Endothelial cell of umbilical vein (primary cell): ENCODE measurements at regions of chr12 and their contacts with region 1.

Region 1: GRCh38 chr12:107702106-107702505 is 16.5 kb downstream of the PWP1 start:
- DNase-seq: no peak
- H3K4me3 ChIP-seq: no peak overlapping the region
- H3K27ac ChIP-seq: no peak overlapping the region
- H3K4me1 ChIP-seq: no peaks in the 10 kb centered on the region
- H3K27me3 ChIP-seq: no peaks in the 10 kb centered on the region
- CTCF ChIP-seq: no peak
- POLR2A ChIP-seq: no peak

Region 2: DNA sequence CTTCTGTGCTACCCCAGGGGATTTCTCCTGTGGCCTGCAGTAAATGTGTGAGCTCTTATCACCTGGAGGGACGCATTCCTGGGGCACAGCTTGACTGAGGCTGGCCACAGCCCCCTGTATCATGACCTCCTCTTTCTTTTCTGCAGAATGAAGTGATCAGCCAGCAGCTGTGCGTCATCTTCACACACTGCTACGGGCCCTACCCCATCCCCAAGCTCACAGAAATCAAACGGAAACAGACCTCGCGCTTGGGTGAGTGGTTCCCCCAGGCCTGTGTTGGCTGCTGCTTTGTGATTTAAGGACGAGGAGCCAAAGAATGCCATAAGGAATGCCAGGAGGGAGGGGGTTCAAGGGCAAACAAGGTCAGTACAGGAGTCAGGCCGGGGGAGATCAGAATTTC is 67.0 kb before region 1 on chr12:
- CTCF ChIA-PET with region 1: no interaction called
- POLR2A ChIA-PET with region 1: no interaction called
- dilution Hi-C with region 1: no loop called
- intact Hi-C with region 1: no loop called
- DNase-seq: peak; percentile 38
- H3K4me3 ChIP-seq: no peak overlapping the region
- H3K27ac ChIP-seq: no peak overlapping the region
- H3K4me1 ChIP-seq: no peaks in the 10 kb centered on the region
- H3K27me3 ChIP-seq: no peaks in the 10 kb centered on the region
- CTCF ChIP-seq: no peak
- POLR2A ChIP-seq: no peak

Region 3: GRCh38 chr12:107660235-107660634 is 41.9 kb before region 1 on chr12:
- CTCF ChIA-PET with region 1: no interaction called
- POLR2A ChIA-PET with region 1: no interaction called
- dilution Hi-C with region 1: no loop called
- intact Hi-C with region 1: no loop called
- DNase-seq: no peak
- H3K4me3 ChIP-seq: no peak overlapping the region
- H3K27ac ChIP-seq: no peak overlapping the region
- H3K4me1 ChIP-seq: peaks cover 4% of the 10 kb centered on the region
- H3K27me3 ChIP-seq: no peaks in the 10 kb centered on the region
- CTCF ChIP-seq: no peak
- POLR2A ChIP-seq: no peak

Region 4: GRCh38 chr12:107681836-107682820 is 20.0 kb before region 1 on chr12:
- CTCF ChIA-PET with region 1: no interaction called
- POLR2A ChIA-PET with region 1: no interaction called
- dilution Hi-C with region 1: no loop called
- intact Hi-C with region 1: no loop called
- DNase-seq: no peak
- H3K4me3 ChIP-seq: no peak overlapping the region
- H3K27ac ChIP-seq: no peak overlapping the region
- H3K4me1 ChIP-seq: peaks cover 7% of the 10 kb centered on the region
- H3K27me3 ChIP-seq: peaks cover 11 to 23% of the 10 kb centered on the region in 2 experiments
- CTCF ChIP-seq: no peak
- POLR2A ChIP-seq: no peak

Region 5: DNA sequence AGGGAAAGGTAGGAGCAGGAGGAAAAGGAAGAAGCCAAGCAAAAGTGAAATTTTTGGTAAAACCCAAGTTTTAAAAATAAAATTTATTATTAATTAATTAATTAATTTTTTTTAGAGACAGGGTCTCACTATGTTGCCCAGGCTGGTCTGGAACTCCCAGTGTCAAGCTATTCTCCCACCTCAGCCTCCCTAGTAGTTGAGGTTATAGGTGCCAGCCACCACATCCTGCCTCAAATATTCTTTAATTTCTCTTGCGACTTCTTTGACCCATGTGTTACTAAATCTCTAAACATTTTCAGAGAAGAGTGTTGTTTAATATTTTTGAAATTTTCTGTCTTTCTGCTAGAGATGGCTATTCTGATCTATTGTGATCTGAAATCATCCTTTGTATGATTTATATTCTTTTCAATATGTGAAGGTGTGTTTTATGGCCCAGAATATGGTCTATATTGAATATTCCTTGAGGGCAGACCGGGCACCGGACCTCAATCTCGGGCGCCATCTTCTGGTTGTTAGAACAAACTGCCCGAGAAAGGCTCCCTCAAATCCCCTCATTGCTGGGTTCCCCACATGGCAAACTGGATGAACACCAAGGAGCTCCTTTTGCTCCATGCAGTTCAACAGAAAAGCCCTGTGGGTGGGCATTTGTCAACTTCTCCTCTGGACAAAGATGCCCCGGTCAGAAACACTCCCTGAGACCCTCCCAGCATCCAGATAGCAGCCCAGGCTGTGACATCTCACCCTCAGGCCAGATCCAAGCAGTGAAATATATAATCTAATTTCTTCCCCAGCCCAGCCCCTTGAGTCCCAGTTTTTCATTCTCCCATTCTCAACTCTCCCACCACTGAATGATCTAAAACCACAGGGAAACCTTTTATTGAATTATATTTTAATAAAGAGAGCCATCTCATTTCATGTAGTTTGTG is 182.9 kb after region 1 on chr12:
- CTCF ChIA-PET with region 1: interaction called, 17 read pairs
- POLR2A ChIA-PET with region 1: no interaction called
- dilution Hi-C with region 1: no loop called
- intact Hi-C with region 1: no loop called
- DNase-seq: peak; percentile 54
- H3K4me3 ChIP-seq: no peak overlapping the region
- H3K27ac ChIP-seq: no peak overlapping the region
- H3K4me1 ChIP-seq: no peaks in the 10 kb centered on the region
- H3K27me3 ChIP-seq: no peaks in the 10 kb centered on the region
- CTCF ChIP-seq: peak; percentile 56 to 74
- POLR2A ChIP-seq: no peak